ENCODE measurements at regions of chr20 and their contacts with region 1.

Region 1: DNA sequence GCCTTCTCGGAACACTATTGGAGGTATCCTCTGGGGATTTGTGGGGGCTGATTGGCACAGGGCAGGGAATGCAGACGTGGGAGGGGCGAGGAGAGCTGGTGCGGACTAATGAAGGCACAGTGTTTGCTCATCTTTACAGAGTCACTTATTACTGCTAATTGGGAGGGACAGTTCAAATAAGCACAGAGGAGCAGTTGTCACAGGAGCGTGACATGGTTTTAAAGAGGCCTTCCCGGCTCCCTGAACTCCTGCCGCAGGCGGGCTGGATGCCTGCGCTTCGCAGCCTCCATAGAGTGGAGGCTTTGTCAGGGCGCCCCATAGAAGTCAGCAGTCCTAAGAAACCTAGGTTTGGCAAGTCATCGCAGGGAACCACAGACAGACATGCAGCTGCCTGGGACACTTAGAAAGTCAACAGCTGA is 149.6 kb downstream of the LINC00237 start:
- DNase-seq: no peak
- ATAC-seq: no peak

Region 2: GRCh38 chr20:20875716-20876115 is 80.8 kb before region 1 on chr20:
- intact Hi-C with region 1: no loop called
- DNase-seq: no peak
- ATAC-seq: no peak

Region 3: GRCh38 chr20:20894753-20895152 is 61.8 kb before region 1 on chr20:
- intact Hi-C with region 1: loop called in 1 of 2 experiments (anchors 10 kb)
- DNase-seq: no peak
- ATAC-seq: no peak

Measured in left cardiac atrium (tissue), 4 donors.